Activated CD4-positive, alpha-beta T cell treated with anti-CD3 and anti-CD28 coated beads for 36 hours (primary cell): ENCODE measurements at regions of chr3 and their contacts with region 1.

Region 1: DNA sequence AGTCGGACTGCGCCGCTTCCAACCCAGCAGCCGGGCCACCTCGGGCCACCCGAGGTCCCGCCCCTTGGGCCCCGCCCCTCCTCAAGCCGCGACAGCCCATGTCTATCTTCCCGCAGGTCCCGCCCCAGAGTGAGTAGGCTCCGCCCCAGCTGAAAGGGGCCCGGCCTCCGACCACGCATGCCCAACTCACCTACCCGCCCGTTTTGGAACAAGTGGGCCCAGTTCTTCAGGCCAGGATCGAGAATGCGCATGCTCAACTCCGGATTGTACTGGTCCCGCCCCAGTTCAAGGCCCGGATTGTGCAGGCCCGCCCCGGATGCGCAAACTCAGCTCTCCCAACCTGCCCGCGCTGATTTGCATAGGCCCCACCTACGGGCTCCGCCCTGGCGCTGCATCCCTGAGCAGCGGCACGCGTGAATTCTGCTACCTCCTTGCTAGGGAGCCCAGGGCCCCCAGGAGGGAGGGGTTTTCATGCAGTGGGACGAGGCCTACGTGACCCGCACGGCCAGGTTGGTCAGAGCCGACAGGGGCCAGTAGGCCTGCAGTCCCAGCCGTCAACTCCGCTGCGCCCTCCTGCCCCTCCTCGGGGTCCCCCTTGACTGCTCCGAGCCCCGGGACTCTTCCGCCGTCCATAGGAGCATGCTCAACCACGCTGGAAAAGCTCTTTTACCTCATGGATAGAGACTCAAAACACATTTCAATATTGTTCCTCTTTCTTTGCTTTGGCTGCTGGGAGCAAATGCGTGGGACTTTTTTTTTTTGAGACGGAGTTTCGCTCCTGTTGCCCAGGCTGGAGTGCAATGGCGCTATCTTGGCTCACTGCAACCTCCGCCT is at the start of gene PFKFB4:
- DNase-seq: peak; percentile 100
- ATAC-seq: peak; percentile 91
- H3K4me3 Mint-ChIP-seq: peak within 1 kb of the TSS; percentile 87
- H3K27ac Mint-ChIP-seq: peak within 1 kb of the TSS; percentile 93
- H3K4me1 Mint-ChIP-seq: peaks cover 23% of the 10 kb centered on the region
- H3K27me3 Mint-ChIP-seq: no peaks in the 10 kb centered on the region
- total RNA-seq, gene PFKFB4: 58.4 to 63.7 TPM

Region 2: GRCh38 chr3:47578119-47578632 is 978.8 kb before region 1 on chr3:
- CTCF ChIA-PET with region 1: no interaction called
- POLR2A ChIA-PET with region 1: no interaction called
- intact Hi-C with region 1: loop called in 1 of 2 experiments (anchors 2 kb)
- DNase-seq: peak; percentile 61
- ATAC-seq: peak; percentile 75
- H3K4me3 Mint-ChIP-seq: peak overlapping the region; percentile 52
- H3K27ac Mint-ChIP-seq: no peak overlapping the region
- H3K4me1 Mint-ChIP-seq: no peaks in the 10 kb centered on the region
- H3K27me3 Mint-ChIP-seq: peaks cover 18% of the 10 kb centered on the region

Region 3: GRCh38 chr3:47825590-47825989 is 731.4 kb before region 1 on chr3:
- CTCF ChIA-PET with region 1: no interaction called
- POLR2A ChIA-PET with region 1: no interaction called
- intact Hi-C with region 1: no loop called
- DNase-seq: peak; percentile 25
- ATAC-seq: no peak
- H3K4me3 Mint-ChIP-seq: peak overlapping the region; percentile 90
- H3K27ac Mint-ChIP-seq: peak overlapping the region; percentile 79
- H3K4me1 Mint-ChIP-seq: peaks cover 36% of the 10 kb centered on the region
- H3K27me3 Mint-ChIP-seq: no peaks in the 10 kb centered on the region

Region 4: GRCh38 chr3:48142316-48142870 is 414.6 kb before region 1 on chr3:
- CTCF ChIA-PET with region 1: no interaction called
- POLR2A ChIA-PET with region 1: no interaction called
- intact Hi-C with region 1: no loop called
- DNase-seq: no peak
- ATAC-seq: no peak
- H3K4me3 Mint-ChIP-seq: no peak overlapping the region
- H3K27ac Mint-ChIP-seq: no peak overlapping the region
- H3K4me1 Mint-ChIP-seq: no peaks in the 10 kb centered on the region
- H3K27me3 Mint-ChIP-seq: no peaks in the 10 kb centered on the region

Region 5: DNA sequence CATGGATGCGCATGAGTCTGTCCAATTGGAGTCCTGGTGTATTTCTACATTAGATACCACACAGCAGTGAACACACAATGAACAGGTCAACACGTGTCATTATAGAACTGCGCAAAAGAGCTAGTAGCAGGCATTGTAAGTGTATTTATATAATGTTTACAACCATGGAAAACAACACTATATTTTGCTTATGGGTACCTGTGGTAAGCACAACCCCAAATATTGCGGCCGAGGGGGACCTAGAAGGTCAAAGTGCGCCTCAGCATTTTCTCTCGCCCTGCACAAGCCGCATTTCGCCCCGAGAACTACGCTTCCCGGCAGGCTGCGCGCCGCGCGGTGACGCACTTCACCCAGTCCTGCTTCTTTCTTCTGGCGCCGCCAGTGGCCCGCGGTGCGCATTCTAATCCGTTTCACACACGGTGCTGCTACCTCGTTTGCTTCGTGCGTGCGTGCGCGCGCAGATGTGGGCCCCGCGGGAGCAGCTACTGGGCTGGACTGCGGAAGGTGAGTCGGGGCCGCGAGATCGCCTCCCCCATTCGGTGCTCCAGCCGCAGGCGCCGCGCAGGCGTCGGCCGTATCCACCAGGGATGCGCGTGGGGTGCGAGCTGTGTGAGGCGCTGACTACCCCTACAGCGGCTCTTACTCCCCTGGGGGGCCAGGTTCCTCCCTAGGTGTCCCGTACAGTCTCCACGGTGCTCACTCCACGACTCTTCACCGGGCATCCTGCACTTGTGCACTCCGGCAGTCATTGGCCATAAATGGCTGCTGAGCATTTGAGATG is 316.1 kb before region 1 on chr3 and contains the start of gene ZNF589:
- CTCF ChIA-PET with region 1: interaction called, 7 read pairs
- POLR2A ChIA-PET with region 1: no interaction called
- intact Hi-C with region 1: loop called in 1 of 2 experiments (anchors 1 kb)
- DNase-seq: peak; percentile 97
- ATAC-seq: peak; percentile 99
- H3K4me3 Mint-ChIP-seq: peak within 1 kb of the TSS; percentile 87
- H3K27ac Mint-ChIP-seq: peak within 1 kb of the TSS; percentile 84
- H3K4me1 Mint-ChIP-seq: peaks cover 26% of the 10 kb centered on the region
- H3K27me3 Mint-ChIP-seq: no peaks in the 10 kb centered on the region
- total RNA-seq, gene ZNF589: 28.6 to 29.6 TPM

Region 6: DNA sequence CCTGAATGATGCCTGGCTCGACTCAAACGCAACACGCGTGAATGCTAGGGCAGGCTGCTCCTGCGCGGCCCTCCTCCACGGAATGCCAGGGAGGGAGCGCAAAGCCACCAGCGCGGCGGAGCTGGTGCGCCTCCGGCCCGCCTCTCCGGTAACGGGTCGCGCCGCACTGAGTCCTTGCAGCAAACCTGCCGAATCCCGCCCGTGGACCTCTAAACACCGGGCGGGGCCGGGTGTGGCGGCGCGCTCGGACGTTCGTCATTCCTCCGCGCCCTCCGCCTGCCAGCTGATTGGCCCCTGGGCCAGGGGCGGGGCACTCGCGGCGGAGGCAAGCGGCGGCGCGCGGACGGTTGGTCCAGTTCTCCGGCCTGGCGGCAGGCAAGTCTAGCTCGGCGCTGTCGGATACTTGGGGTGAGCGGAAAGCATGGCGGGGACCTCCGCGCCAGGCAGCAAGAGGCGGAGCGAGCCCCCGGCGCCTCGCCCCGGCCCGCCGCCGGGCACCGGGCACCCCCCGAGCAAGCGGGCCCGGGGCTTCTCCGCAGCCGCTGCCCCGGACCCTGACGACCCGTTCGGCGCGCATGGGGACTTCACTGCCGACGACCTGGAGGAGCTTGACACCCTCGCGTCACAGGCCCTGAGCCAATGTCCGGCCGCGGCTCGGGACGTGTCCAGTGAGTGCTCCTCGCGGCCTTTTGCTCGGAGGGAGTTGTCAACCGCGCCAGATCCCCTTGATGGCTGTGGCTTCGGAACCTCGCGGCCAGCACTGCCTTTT is 110.4 kb before region 1 on chr3 and contains the start of gene ATRIP:
- CTCF ChIA-PET with region 1: interaction called, 3 read pairs
- POLR2A ChIA-PET with region 1: interaction called, 6 read pairs
- intact Hi-C with region 1: loop called (anchors 1 to 2 kb)
- DNase-seq: peak; percentile 91
- ATAC-seq: peak; percentile 98
- H3K4me3 Mint-ChIP-seq: peak within 1 kb of the TSS; percentile 83
- H3K27ac Mint-ChIP-seq: peak within 1 kb of the TSS; percentile 79
- H3K4me1 Mint-ChIP-seq: peaks cover 42% of the 10 kb centered on the region
- H3K27me3 Mint-ChIP-seq: no peaks in the 10 kb centered on the region
- total RNA-seq, gene ATRIP: 16.8 to 21.0 TPM

Region 7: GRCh38 chr3:48609088-48610005 is 52.3 kb after region 1 on chr3 and contains the start of gene UQCRC1:
- CTCF ChIA-PET with region 1: interaction called, 5 read pairs
- POLR2A ChIA-PET with region 1: no interaction called
- intact Hi-C with region 1: loop called (anchors 1 to 5 kb)
- DNase-seq: peak; percentile 96
- ATAC-seq: peak; percentile 96
- H3K4me3 Mint-ChIP-seq: peak within 1 kb of the TSS; percentile 97
- H3K27ac Mint-ChIP-seq: peak within 1 kb of the TSS; percentile 95
- H3K4me1 Mint-ChIP-seq: peaks cover 27% of the 10 kb centered on the region
- H3K27me3 Mint-ChIP-seq: no peaks in the 10 kb centered on the region
- total RNA-seq, gene UQCRC1: 205 to 231 TPM

Region 8: GRCh38 chr3:48716982-48717746 is 160.2 kb after region 1 on chr3 and contains the start of gene IP6K2:
- CTCF ChIA-PET with region 1: no interaction called
- POLR2A ChIA-PET with region 1: interaction called, 5 read pairs
- intact Hi-C with region 1: loop called (anchors 1 kb)
- DNase-seq: peak; percentile 99
- ATAC-seq: peak; percentile 100
- H3K4me3 Mint-ChIP-seq: peak within 1 kb of the TSS; percentile 97
- H3K27ac Mint-ChIP-seq: peak within 1 kb of the TSS; percentile 97
- H3K4me1 Mint-ChIP-seq: peaks cover 31% of the 10 kb centered on the region
- H3K27me3 Mint-ChIP-seq: no peaks in the 10 kb centered on the region
- total RNA-seq, gene IP6K2: 39.4 to 48.3 TPM

Region 9: DNA sequence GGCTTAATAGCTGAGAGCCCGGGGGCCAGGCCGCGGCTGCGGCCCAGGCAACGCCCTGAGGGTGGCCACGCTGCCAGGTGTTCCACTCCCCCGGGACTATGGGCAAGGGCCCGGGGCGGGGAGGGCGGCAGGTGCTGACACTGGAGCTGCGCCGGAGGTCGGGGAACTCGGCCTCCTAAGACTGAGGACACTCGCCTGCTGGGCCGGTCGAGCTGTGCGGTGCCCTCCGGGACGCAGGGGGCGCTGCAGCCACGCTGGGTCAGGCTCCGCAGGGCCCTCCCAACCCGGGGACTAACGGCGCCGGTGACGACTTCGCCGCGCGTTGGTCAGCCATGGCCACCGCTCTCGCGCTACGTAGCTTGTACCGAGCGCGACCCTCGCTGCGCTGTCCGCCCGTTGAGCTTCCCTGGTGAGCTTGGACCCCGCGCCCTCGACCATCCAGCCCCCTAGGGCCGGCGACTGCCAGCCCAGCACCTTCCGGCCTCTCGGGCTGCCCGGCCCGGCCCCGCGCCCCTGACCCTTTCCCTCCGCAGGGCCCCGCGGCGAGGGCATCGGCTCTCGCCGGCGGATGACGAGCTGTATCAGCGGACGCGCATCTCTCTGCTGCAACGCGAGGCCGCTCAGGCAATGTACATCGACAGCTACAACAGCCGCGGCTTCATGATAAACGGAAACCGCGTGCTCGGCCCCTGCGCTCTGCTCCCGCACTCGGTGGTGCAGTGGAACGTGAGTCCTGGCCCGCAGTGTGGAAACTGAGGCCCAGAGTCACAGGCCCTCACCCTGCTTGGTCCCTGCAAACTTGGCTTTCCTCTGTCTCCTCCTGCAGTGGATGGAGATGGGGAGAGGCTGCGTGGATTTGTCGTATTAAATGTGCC is 465.0 kb after region 1 on chr3 and contains the start of gene NDUFAF3:
- CTCF ChIA-PET with region 1: no interaction called
- POLR2A ChIA-PET with region 1: no interaction called
- intact Hi-C with region 1: loop called in 1 of 2 experiments (anchors 2 kb)
- DNase-seq: peak; percentile 96
- ATAC-seq: peak; percentile 78
- H3K4me3 Mint-ChIP-seq: peak within 1 kb of the TSS; percentile 95
- H3K27ac Mint-ChIP-seq: peak within 1 kb of the TSS; percentile 96
- H3K4me1 Mint-ChIP-seq: peaks cover 60% of the 10 kb centered on the region
- H3K27me3 Mint-ChIP-seq: no peaks in the 10 kb centered on the region
- total RNA-seq, gene NDUFAF3: 90.8 to 108 TPM

Region 10: GRCh38 chr3:49120438-49121131 is 563.6 kb after region 1 on chr3 and contains the start of gene USP19:
- CTCF ChIA-PET with region 1: no interaction called
- POLR2A ChIA-PET with region 1: no interaction called
- intact Hi-C with region 1: no loop called
- DNase-seq: peak; percentile 97
- ATAC-seq: peak; percentile 97
- H3K4me3 Mint-ChIP-seq: peak within 1 kb of the TSS; percentile 87
- H3K27ac Mint-ChIP-seq: peak within 1 kb of the TSS; percentile 88
- H3K4me1 Mint-ChIP-seq: peaks cover 19% of the 10 kb centered on the region
- H3K27me3 Mint-ChIP-seq: no peaks in the 10 kb centered on the region
- total RNA-seq, gene USP19: 45.2 to 45.9 TPM